Body of pancreas (tissue), 4 donors: ENCODE measurements at regions of chr15 and their contacts with region 1.

Region 1: DNA sequence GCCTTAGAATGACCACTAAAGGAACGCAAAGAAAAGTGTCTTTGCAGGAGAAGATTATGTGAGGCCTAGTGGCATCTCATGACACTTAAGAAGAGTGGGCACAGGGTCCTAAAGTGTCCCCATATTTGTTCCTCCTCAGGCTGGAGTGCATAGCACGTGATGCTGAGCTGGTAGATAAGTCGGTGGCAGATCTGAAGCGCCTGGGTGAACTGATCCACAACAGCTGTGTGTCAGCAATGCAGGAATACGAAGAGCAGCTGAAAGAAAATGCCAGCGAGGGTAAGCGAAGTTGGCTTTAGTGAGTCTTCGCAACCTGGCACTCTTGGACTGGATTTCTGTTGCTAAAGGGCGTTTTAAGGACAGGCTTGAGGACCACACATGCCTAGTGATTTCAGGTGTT is 92.6 kb downstream of the CHD2 start:
- DNase-seq: no peak
- ATAC-seq: no peak
- H3K4me3 ChIP-seq: no peak overlapping the region
- H3K27ac ChIP-seq: no peak overlapping the region
- H3K4me1 ChIP-seq: no peaks in the 10 kb centered on the region
- H3K27me3 ChIP-seq: no peaks in the 10 kb centered on the region
- CTCF ChIP-seq: no peak
- POLR2A ChIP-seq: no peak

Region 2: DNA sequence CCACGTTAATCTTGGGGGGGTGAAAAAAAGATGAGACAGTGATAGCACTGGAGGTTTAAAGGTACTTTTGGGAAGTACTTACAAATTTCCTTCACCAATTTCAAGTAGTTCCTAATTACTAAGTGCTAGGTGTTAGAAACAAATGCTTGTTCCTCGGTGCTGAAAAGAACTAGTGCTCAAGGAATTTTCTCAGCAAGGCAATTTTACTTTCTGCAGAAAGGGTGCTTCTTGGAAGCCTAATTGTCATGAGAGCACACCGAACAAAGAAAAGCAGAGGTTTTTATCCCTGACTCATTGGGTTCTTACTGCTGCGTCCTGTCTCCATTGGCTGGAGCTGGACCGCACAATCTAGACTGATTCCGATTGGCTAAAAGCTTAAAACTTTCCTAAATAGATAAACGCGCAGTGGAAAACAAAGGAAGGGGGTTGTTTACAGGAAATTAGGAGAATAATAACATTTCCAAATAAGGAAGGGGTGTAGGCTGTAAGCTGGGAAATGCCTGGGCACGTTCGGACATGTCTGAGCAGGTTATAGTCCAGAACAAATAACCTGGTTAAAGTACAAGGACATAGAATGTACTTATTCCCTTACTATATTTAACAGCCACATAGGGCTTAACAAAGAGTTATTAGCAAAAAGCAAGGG is 43.0 kb before region 1 on chr15:
- intact Hi-C with region 1: loop called (anchors 10 kb)
- DNase-seq: no peak
- ATAC-seq: no peak
- H3K4me3 ChIP-seq: no peak overlapping the region
- H3K27ac ChIP-seq: no peak overlapping the region
- H3K4me1 ChIP-seq: peaks cover 19% of the 10 kb centered on the region
- H3K27me3 ChIP-seq: no peaks in the 10 kb centered on the region
- CTCF ChIP-seq: no peak
- POLR2A ChIP-seq: no peak